ENCODE measurements at regions of chr1 and their contacts with region 1.

Region 1: GRCh38 chr1:22641906-22642636 is 1.4 kb upstream of the C1QC start:
- DNase-seq: peak; percentile 36 to 90
- H3K4me3 ChIP-seq: no peak overlapping the region
- H3K4me1 ChIP-seq: no peaks in the 10 kb centered on the region
- H3K27me3 ChIP-seq: peaks cover 4% of the 10 kb centered on the region

Region 2: GRCh38 chr1:22131875-22132486 is 510.1 kb before region 1 on chr1:
- in situ Hi-C with region 1: loop called (anchors 10 kb)
- DNase-seq: peak; percentile 39 to 78
- H3K4me3 ChIP-seq: no peak overlapping the region
- H3K4me1 ChIP-seq: no peaks in the 10 kb centered on the region
- H3K27me3 ChIP-seq: no peaks in the 10 kb centered on the region

Region 3: GRCh38 chr1:22416555-22417454 is 225.3 kb before region 1 on chr1:
- in situ Hi-C with region 1: loop called (anchors 5 kb)
- DNase-seq: peak; percentile 72 to 91
- H3K4me3 ChIP-seq: no peak overlapping the region
- H3K4me1 ChIP-seq: no peaks in the 10 kb centered on the region
- H3K27me3 ChIP-seq: peaks cover 7% of the 10 kb centered on the region

Region 4: DNA sequence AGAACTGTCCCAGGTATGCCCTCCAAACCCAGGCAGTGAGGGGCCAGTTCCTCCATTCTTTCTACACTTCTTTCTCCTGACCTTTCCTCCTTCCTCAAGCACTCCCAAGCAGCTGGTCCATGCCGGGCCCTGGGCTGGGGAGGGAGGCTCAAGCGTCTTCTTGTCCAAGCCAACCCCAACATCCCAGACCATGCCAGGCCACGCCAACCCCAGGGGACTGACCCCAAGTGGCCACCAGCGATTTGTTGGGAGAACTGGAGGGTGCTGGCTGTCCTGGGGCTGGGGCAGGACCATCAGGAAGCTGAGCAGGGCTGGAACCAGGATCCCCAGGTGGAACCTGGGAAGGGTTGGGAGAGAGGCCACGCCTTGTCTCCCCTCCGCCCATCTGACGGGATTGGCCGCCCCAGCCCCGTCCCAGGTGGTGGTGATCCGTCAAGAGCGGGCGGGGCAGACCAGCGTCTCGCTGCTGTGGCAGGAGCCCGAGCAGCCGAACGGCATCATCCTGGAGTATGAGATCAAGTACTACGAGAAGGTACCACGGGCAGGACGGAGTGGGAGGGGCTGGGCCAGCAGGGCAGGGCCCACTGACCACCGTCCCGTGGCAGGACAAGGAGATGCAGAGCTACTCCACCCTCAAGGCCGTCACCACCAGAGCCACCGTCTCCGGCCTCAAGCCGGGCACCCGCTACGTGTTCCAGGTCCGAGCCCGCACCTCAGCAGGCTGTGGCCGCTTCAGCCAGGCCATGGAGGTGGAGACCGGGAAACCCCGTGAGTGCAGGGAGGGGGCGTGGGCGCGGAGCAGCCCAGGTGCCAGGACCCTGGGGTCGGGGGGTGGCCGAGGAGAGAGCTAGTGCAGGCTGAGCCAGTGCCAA is 48.9 kb before region 1 on chr1:
- in situ Hi-C with region 1: no loop called
- DNase-seq: no peak
- H3K4me3 ChIP-seq: no peak overlapping the region
- H3K4me1 ChIP-seq: no peaks in the 10 kb centered on the region
- H3K27me3 ChIP-seq: peaks cover 36% of the 10 kb centered on the region